ENCODE measurements at regions of chr5 and their contacts with region 1.

Region 1: DNA sequence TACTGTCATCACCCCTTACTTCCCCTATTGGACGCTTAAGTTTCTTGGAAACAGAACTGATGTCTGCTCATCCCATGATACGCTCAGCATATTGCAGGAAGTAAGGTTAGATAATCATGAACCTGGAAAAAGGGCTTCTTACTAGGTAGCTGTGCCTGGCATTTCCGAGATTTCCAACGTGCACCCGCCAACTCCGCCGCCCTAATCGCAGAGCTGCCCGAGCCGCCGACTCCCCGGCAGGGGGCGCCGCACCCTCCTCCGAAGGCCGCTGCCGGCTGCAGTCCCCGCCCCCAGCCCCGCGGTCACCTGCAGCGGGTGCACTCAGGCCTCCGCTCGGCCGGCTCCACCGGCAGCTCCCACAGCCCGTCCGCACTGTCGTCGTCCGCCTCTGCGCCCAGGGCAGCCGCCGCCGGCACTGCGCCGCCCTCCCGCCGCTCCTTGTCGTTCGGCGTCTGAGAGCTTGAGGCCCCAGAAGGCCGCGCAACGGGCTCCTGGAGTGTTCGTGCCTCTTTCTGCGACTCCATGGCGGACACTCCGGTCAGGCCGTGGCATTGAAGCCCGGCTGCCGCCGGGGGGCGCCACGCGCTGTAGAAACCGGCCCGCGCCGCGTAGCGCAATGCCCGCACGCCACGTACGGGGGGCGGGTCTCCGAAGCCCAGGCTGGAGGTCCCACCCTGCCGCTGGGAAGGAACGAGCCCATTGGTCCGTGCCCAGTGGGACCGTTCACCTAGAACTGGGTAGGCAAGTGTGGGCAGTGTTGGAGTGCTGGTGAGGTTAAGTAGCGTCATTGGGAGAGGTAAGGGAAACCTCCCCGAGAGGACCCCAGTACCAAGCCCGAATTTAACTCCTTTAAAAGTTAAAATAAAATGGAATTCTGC is at the start of gene DTWD2:
- DNase-seq: peak; percentile 95
- H3K4me3 Mint-ChIP-seq: peak within 1 kb of the TSS; percentile 70
- H3K27ac Mint-ChIP-seq: peak within 1 kb of the TSS; percentile 40
- H3K4me1 Mint-ChIP-seq: peaks cover 14% of the 10 kb centered on the region
- H3K27me3 Mint-ChIP-seq: no peaks in the 10 kb centered on the region
- total RNA-seq, gene DTWD2: 2.3 to 2.8 TPM

Region 2: DNA sequence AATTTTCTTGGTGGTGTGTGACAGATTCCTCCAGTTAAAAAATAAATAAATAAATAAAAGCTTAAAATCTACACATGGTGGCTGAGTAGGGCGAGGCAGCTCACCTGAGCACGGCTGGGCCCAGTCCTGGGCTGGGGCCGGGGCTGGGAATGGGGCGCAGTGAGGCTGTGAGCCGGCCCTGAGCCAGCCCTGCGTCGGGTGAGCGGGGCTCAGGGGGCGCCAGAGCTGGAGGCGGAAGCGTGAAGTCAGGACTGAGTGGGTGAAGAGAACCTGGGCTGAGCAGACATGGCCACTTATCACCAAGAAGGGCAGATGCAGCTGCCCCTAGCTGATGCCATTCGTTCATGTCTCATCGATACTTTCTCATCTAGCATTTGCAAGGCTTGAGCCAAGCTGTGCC is 23.0 kb after region 1 on chr5:
- CTCF ChIA-PET with region 1: interaction called, 11 read pairs
- POLR2A ChIA-PET with region 1: no interaction called
- intact Hi-C with region 1: no loop called
- DNase-seq: no peak
- H3K4me3 Mint-ChIP-seq: no peak overlapping the region
- H3K27ac Mint-ChIP-seq: no peak overlapping the region
- H3K4me1 Mint-ChIP-seq: no peaks in the 10 kb centered on the region
- H3K27me3 Mint-ChIP-seq: no peaks in the 10 kb centered on the region

Region 3: DNA sequence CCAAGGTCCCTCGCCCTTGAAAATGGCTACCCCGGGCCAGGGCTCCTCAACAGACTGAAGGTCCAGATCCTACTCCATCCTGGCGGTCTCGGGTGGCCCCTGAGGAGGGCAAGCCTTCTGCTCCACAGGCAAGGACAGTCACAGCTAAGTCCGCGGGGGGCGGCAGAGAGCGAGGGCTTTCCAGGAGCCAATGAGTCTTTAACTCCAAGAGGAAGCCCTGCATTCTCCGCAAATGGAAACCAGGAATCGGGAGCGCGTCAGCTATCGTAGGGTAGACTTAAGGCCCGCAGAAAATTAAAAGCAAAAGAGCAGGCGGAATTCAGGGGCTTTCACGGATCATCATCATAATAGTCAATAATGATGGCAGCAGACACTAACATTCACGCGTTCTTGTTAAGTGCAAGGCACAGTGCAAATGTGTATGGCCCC is 279.7 kb after region 1 on chr5:
- CTCF ChIA-PET with region 1: interaction called, 21 read pairs
- POLR2A ChIA-PET with region 1: interaction called, 3 read pairs
- intact Hi-C with region 1: loop called (anchors 1 kb)
- DNase-seq: peak; percentile 91
- H3K4me3 Mint-ChIP-seq: peak overlapping the region; percentile 99
- H3K27ac Mint-ChIP-seq: peak overlapping the region; percentile 99
- H3K4me1 Mint-ChIP-seq: peaks cover 49% of the 10 kb centered on the region
- H3K27me3 Mint-ChIP-seq: no peaks in the 10 kb centered on the region

Region 4: GRCh38 chr5:119355685-119356611 is 367.7 kb after region 1 on chr5 and contains the start of gene TNFAIP8:
- CTCF ChIA-PET with region 1: interaction called, 13 read pairs
- POLR2A ChIA-PET with region 1: no interaction called
- intact Hi-C with region 1: no loop called
- DNase-seq: peak; percentile 90
- H3K4me3 Mint-ChIP-seq: peak within 1 kb of the TSS; percentile 99
- H3K27ac Mint-ChIP-seq: peak within 1 kb of the TSS; percentile 90
- H3K4me1 Mint-ChIP-seq: peaks cover 71% of the 10 kb centered on the region
- H3K27me3 Mint-ChIP-seq: no peaks in the 10 kb centered on the region
- total RNA-seq, gene TNFAIP8: 153 to 159 TPM

Region 5: GRCh38 chr5:119435436-119436132 is 447.4 kb after region 1 on chr5:
- CTCF ChIA-PET with region 1: interaction called, 34 read pairs
- POLR2A ChIA-PET with region 1: no interaction called
- intact Hi-C with region 1: loop called (anchors 1 kb)
- DNase-seq: peak; percentile 80
- H3K4me3 Mint-ChIP-seq: peak overlapping the region; percentile 3
- H3K27ac Mint-ChIP-seq: peak overlapping the region; percentile 4
- H3K4me1 Mint-ChIP-seq: peaks cover 7% of the 10 kb centered on the region
- H3K27me3 Mint-ChIP-seq: peaks cover 26% of the 10 kb centered on the region

Region 6: GRCh38 chr5:120457839-120458507 is 1469.7 kb after region 1 on chr5:
- CTCF ChIA-PET with region 1: no interaction called
- POLR2A ChIA-PET with region 1: no interaction called
- intact Hi-C with region 1: loop called (anchors 5 kb)
- DNase-seq: peak; percentile 55
- H3K4me3 Mint-ChIP-seq: peak overlapping the region; percentile 59
- H3K27ac Mint-ChIP-seq: no peak overlapping the region
- H3K4me1 Mint-ChIP-seq: peaks cover 3% of the 10 kb centered on the region
- H3K27me3 Mint-ChIP-seq: peaks cover 3% of the 10 kb centered on the region

Measured in activated CD4-positive, alpha-beta memory T cell treated with anti-CD3 and anti-CD28 coated beads for 36 hours (primary cell).